Sigmoid colon (tissue), 7 donors: ENCODE measurements at regions of chr1 and their contacts with region 1.

Region 1: GRCh38 chr1:202810615-202811295 is at the start of gene PCAT6:
- DNase-seq: peak; percentile 98
- H3K4me3 ChIP-seq: peak within 1 kb of the TSS; percentile 55 to 89 (median 82)
- H3K27ac ChIP-seq: peak within 1 kb of the TSS; percentile 84 to 91 (median 87)
- H3K4me1 ChIP-seq: peaks cover 0 to 38% (median 24%) of the 10 kb centered on the region in 4 donors
- H3K27me3 ChIP-seq: no peaks in the 10 kb centered on the region
- CTCF ChIP-seq: no peak
- EP300 ChIP-seq: peak in 2 of 4 donors; percentile 42 to 70
- POLR2A ChIP-seq: peak; percentile 55 to 76
- total RNA-seq, gene PCAT6: not detected

Region 2: GRCh38 chr1:202750758-202751157 is 60.0 kb before region 1 on chr1:
- intact Hi-C with region 1: loop called (anchors 5 kb)
- DNase-seq: no peak
- H3K4me3 ChIP-seq: no peak overlapping the region
- H3K27ac ChIP-seq: no peak overlapping the region
- H3K4me1 ChIP-seq: no peaks in the 10 kb centered on the region
- H3K27me3 ChIP-seq: no peaks in the 10 kb centered on the region
- CTCF ChIP-seq: no peak
- EP300 ChIP-seq: no peak
- POLR2A ChIP-seq: no peak

Region 3: DNA sequence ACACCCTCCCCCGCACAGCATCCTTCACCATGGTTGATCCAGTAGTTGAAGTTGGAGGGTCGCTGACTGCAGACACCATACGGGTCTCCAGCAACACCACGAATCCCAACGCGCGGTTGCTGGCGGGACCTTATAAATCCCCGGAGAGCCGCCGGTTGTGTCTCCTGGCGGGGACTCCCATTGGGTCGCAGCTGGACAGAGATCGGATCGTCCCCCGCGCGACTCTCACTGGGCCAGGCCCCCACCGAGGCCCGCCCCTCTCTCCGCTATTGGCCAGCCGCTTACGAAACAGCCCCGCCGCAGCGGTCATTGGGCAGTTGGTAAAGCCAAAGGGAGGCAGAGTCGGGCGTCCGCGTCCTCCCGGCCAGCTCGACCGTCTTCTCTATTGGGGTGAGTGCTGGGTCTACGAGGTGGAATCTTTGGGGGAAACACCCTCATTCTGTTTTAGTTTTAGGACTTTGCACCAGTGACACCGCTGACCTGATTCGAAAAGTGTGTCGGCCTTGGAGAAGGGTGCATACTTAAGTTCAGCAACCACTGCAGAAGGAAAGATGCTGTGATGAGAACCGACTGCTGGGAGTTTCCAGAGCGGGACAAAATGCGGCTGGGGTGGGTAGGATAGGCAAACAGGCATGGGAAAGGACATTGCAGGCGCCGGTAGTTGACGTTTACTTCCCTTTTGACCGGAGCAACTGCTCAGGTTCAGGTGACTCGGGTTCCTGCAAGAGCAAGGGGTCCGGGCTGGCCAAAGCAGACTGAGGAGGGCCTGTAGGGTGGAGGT is 50.9 kb after region 1 on chr1:
- intact Hi-C with region 1: loop called (anchors 1 kb)
- DNase-seq: peak; percentile 96
- H3K4me3 ChIP-seq: peak overlapping the region; percentile 53 to 89 (median 69)
- H3K27ac ChIP-seq: peak overlapping the region; percentile 54 to 74 (median 66)
- H3K4me1 ChIP-seq: peaks cover 0 to 13% (median 13%) of the 10 kb centered on the region in 4 donors
- H3K27me3 ChIP-seq: no peaks in the 10 kb centered on the region
- CTCF ChIP-seq: no peak
- EP300 ChIP-seq: no peak
- POLR2A ChIP-seq: peak in 1 of 2 donors; percentile 23

Region 4: DNA sequence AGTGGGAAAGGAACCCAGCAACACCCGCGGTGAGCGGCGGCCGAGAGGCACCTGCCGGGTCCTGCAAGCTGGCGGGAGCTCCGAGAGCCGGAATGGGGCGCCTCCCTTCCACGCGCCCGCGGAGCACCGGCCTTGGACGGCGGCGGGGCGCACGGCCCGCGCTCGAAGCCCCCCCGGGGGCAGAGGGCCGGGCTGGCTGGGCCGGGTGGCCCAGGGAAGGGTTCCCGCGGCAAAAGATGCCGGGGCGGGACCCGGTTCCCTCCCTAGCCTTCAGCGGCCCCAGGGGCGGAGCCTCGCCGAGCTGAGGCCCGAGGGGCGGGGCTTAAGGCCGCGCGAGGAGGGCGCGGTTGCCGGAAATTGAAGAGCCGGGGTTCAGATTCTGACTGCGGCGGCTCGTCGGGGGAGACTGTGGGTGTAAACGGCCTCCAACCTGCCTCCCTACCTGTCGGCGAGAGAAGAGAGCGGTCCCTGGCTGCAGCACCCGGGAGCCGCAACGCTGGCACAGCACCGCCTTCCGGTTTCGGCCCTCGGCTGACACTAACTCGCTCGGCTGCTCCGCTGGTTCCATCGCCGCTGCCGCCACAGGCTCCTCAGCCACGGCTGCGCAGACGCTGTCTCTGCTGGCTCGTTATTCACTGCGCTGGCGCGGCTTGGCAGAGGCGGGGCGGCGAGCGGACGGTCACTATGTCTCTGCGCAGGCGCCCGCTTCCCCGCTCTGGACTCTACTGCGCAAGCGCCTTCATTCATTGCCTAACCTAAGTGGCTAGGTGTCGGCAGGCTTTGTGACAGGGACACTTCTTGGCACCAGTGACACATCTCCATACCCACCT is 78.0 kb after region 1 on chr1 and contains the start of gene RABIF:
- intact Hi-C with region 1: loop called (anchors 2 kb)
- DNase-seq: peak; percentile 98
- H3K4me3 ChIP-seq: peak within 1 kb of the TSS; percentile 69 to 82 (median 75)
- H3K27ac ChIP-seq: peak within 1 kb of the TSS; percentile 87 to 98 (median 92)
- H3K4me1 ChIP-seq: peaks cover 0 to 17% (median 10%) of the 10 kb centered on the region in 4 donors
- H3K27me3 ChIP-seq: no peaks in the 10 kb centered on the region
- CTCF ChIP-seq: no peak
- EP300 ChIP-seq: no peak
- POLR2A ChIP-seq: peak; percentile 72 to 92
- total RNA-seq, gene RABIF: 3.6 to 7.3 (median 4.8) TPM

Region 5: GRCh38 chr1:202968840-202969295 is 158.1 kb after region 1 on chr1:
- intact Hi-C with region 1: loop called (anchors 2 kb)
- DNase-seq: peak; percentile 74
- H3K4me3 ChIP-seq: no peak overlapping the region
- H3K27ac ChIP-seq: peak overlapping the region in 2 of 4 donors; percentile 95 to 96
- H3K4me1 ChIP-seq: peaks cover 0 to 29% (median 16%) of the 10 kb centered on the region in 4 donors
- H3K27me3 ChIP-seq: no peaks in the 10 kb centered on the region
- CTCF ChIP-seq: peak; percentile 31 to 52 (median 35)
- EP300 ChIP-seq: no peak
- POLR2A ChIP-seq: no peak

Region 6: DNA sequence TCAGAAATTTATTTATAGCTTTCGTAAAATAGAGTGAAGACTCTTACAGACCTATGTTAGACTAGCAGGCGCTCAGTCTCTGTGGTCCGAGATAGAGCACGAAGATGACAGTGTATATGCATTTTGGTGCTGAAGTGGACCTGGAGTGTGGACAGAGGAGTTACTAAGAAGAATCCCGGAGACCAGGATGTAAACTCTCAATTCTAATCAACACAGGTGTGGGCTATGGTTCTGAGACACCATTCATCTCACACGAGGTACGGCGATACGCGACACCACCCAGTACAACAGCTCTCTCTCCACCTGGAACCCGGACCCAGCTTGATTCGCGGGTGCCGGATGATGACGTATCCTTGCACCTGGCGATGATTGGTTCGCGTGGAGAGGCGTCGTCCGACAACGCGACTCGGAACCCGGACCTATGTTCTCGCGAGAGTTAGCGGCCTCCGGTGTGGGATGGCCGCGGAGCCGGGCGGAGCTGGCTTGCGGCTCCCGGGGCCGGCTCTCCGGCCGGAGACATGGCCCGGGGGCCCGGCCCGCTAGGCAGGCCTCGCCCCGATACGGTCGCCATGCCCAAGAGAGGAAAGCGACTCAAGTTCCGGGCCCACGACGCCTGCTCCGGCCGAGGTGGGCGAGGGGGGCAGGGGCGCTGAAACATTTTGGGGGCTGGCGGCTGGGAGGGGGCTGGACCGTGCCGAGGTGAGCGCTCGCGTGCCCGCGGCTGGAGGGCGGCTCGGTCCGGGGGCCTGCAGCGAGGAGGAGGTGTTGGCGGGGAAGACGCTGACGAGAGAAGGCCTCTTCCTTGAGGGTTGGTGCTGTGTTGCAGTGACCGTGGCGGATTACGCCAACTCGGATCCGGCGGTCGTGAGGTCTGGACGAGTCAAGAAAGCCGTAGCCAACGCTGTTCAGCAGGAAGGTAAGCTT is 196.5 kb after region 1 on chr1 and contains the start of gene TMEM183A:
- intact Hi-C with region 1: loop called (anchors 5 kb)
- DNase-seq: peak; percentile 99
- H3K4me3 ChIP-seq: peak within 1 kb of the TSS; percentile 69 to 97 (median 81)
- H3K27ac ChIP-seq: peak within 1 kb of the TSS; percentile 88 to 96 (median 93)
- H3K4me1 ChIP-seq: peaks cover 0 to 30% (median 26%) of the 10 kb centered on the region in 4 donors
- H3K27me3 ChIP-seq: no peaks in the 10 kb centered on the region
- CTCF ChIP-seq: no peak
- EP300 ChIP-seq: no peak
- POLR2A ChIP-seq: peak; percentile 82 to 91
- total RNA-seq, gene TMEM183A: 71.7 to 99.4 (median 88.2) TPM

Region 7: DNA sequence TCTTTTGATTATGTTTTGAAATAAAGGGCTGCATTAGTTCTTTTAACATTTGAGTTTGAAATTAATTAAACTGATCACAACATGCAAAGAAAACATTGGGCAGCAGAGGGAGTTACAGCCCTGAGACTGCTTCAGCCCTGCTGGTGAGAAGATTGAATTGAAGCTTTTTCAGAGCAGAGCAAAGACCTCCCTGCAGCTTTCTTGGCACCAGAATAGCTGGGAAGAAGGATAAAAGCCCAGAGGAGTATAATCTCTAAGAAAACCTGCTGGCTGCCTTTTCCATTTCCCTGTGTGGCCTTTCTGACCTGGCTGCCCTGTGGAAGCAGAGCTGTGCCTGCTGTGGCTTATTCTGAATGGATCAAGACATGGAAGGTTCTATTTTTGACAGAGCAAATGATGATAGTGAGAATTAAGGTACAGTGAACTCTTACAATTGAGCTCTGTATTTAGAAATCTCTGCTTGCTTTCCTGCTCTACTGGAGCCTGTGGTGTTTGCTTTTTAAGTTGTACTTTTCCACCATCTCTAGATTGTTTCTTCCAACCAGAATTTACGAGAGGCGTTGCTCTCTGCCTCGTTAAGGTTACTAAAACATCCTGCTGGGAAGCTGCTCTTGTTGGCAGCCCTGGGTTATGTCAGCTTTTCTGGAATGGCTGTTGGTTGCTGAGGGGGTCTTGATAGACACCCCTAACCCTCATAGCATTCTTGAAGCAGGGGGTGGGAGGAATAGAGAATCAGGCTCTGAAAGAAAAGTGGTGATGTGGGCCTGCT is 1060.5 kb after region 1 on chr1:
- intact Hi-C with region 1: no loop called
- DNase-seq: peak; percentile 69
- H3K4me3 ChIP-seq: peak overlapping the region in 1 of 4 donors; percentile 2
- H3K27ac ChIP-seq: peak overlapping the region in 3 of 4 donors; percentile 77 to 80 (median 77)
- H3K4me1 ChIP-seq: peaks cover 0 to 25% (median 22%) of the 10 kb centered on the region in 4 donors
- H3K27me3 ChIP-seq: no peaks in the 10 kb centered on the region
- CTCF ChIP-seq: peak; percentile 85 to 98 (median 96)
- EP300 ChIP-seq: no peak
- POLR2A ChIP-seq: no peak